Ovary (tissue), 10 donors: ENCODE measurements at regions of chr7 and their contacts with region 1.

Region 1: GRCh38 chr7:70953796-70954195 is 178.1 kb upstream of the GALNT17 start:
- DNase-seq: no peak
- H3K4me3 ChIP-seq: no peak overlapping the region
- H3K27ac ChIP-seq: no peak overlapping the region
- H3K4me1 ChIP-seq: peaks cover 2% of the 10 kb centered on the region
- H3K27me3 ChIP-seq: no peaks in the 10 kb centered on the region
- CTCF ChIP-seq: no peak
- EP300 ChIP-seq: no peak
- POLR2A ChIP-seq: no peak

Region 2: GRCh38 chr7:70972693-70973092 is 18.9 kb after region 1 on chr7:
- intact Hi-C with region 1: loop called in 1 of 4 experiments (anchors 2 kb)
- DNase-seq: no peak
- H3K4me3 ChIP-seq: no peak overlapping the region
- H3K27ac ChIP-seq: no peak overlapping the region
- H3K4me1 ChIP-seq: no peaks in the 10 kb centered on the region
- H3K27me3 ChIP-seq: no peaks in the 10 kb centered on the region
- CTCF ChIP-seq: no peak
- EP300 ChIP-seq: no peak
- POLR2A ChIP-seq: no peak